ENCODE measurements at regions of chr3 and their contacts with region 1.

Region 1: GRCh38 chr3:125055913-125056745 is at the start of gene HEG1:
- DNase-seq: peak; percentile 93 to 94
- ATAC-seq: peak; percentile 89 to 94 (median 92)
- H3K4me3 ChIP-seq: peak within 1 kb of the TSS; percentile 79 to 96 (median 85)
- H3K27ac ChIP-seq: peak within 1 kb of the TSS; percentile 92 to 99 (median 96)
- H3K4me1 ChIP-seq: peaks cover 20 to 76% (median 63%) of the 10 kb centered on the region in 9 donors
- H3K27me3 ChIP-seq: no peaks in the 10 kb centered on the region
- CTCF ChIP-seq: no peak
- total RNA-seq, gene HEG1: 79.0 to 186 (median 143) TPM

Region 2: GRCh38 chr3:125003369-125003853 is 52.7 kb before region 1 on chr3:
- intact Hi-C with region 1: loop called in 8 of 10 experiments (anchors 2 to 10 kb)
- DNase-seq: peak; percentile 35 to 71
- ATAC-seq: peak; percentile 76 to 95 (median 90)
- H3K4me3 ChIP-seq: no peak overlapping the region
- H3K27ac ChIP-seq: peak overlapping the region; percentile 17 to 84 (median 52)
- H3K4me1 ChIP-seq: peaks cover 20 to 81% (median 66%) of the 10 kb centered on the region in 9 donors
- H3K27me3 ChIP-seq: no peaks in the 10 kb centered on the region
- CTCF ChIP-seq: no peak

Region 3: GRCh38 chr3:125019271-125019670 is 36.9 kb before region 1 on chr3:
- intact Hi-C with region 1: loop called in 1 of 10 experiments (anchors 5 kb)
- DNase-seq: no peak
- ATAC-seq: peak in 2 of 8 donors; percentile 12 to 33
- H3K4me3 ChIP-seq: no peak overlapping the region
- H3K27ac ChIP-seq: no peak overlapping the region
- H3K4me1 ChIP-seq: peaks cover 3 to 85% (median 34%) of the 10 kb centered on the region in 9 donors
- H3K27me3 ChIP-seq: no peaks in the 10 kb centered on the region
- CTCF ChIP-seq: no peak

Region 4: DNA sequence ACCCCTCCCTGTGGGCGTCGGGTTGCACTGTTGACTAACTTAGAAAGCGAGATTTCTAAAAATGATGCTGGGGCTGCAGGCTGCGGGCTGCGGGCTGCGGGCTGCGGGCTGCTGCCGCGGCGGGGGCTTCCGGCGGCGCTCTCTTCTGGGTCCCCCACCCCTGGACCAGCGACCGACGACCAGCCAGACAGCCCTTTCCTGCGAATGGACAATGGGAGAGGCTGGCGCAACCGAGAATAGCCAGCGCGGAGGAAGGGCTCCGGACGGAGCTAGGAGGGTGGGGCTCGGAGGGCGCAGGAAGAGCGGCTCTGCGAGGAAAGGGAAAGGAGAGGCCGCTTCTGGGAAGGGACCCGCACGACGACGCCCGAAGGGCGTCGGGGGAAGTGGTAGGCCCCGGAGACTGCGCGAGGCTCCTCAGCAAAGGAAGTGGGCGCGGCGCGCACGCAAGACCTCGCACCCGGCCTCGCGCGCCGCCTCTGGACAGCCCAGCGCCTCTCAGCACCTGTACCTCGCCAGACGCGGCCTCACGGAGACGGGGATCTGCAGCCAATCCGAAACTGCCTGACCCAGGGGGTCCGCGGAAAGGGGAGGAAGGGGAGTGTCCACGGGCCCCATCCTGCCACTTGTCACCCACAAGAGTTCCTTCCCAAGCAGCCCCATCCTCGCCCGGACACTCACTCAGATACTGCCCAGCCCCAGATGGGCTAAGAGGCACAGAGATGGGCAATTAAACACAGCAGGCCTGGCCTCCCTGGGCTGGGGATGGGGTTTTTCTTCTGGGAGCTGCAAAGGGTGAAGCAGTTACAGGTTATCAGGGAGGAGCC is 85.7 kb after region 1 on chr3:
- intact Hi-C with region 1: loop called (anchors 2 to 5 kb)
- DNase-seq: peak; percentile 78 to 82
- ATAC-seq: peak; percentile 76 to 92 (median 87)
- H3K4me3 ChIP-seq: peak overlapping the region in 9 of 10 donors; percentile 21 to 51 (median 47)
- H3K27ac ChIP-seq: peak overlapping the region; percentile 59 to 94 (median 84)
- H3K4me1 ChIP-seq: peaks cover 26 to 80% (median 59%) of the 10 kb centered on the region in 9 donors
- H3K27me3 ChIP-seq: no peaks in the 10 kb centered on the region
- CTCF ChIP-seq: peak in 8 of 9 donors; percentile 23 to 74 (median 58)

Region 5: DNA sequence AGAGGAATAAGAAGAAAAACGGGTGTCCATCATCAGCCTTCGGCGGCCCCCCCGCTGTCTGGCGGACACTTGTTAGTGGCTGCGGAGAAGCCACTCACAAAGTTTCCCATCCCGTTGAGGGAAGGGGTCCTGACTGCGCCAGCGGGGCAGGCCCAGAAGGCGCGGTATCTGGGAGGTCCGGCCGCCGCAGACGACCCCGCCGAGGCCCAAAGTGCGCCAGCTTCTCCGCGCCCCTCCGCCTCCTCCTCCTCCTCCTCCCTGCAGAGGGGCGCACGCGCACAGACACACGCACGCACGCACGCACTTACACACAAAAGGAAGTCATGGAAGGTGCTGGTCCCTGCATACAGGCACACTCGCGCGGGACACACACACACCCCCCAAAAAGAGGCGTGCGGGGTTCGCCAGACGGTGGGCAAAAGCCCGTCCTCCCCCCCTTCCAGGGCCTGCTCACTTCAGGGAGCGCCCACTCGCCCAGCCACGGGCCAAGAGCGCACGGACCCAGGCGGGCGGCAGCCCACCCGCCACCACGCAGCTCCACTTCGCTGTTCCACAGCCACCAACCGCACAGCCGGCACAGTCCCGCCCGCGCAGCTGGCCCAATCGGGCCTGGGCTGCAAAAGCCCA is 301.0 kb after region 1 on chr3:
- intact Hi-C with region 1: loop called in 1 of 10 experiments (anchors 10 kb)
- DNase-seq: peak; percentile 48 to 69
- ATAC-seq: peak; percentile 83 to 96 (median 92)
- H3K4me3 ChIP-seq: peak overlapping the region; percentile 2 to 68 (median 62)
- H3K27ac ChIP-seq: peak overlapping the region in 9 of 10 donors; percentile 64 to 86 (median 82)
- H3K4me1 ChIP-seq: peaks cover 0 to 74% (median 56%) of the 10 kb centered on the region in 9 donors
- H3K27me3 ChIP-seq: no peaks in the 10 kb centered on the region
- CTCF ChIP-seq: no peak

Measured in heart right ventricle (tissue), 16 donors.